KBM-7 (cell line): ENCODE measurements at regions of chr4 and their contacts with region 1.

Region 1: GRCh38 chr4:88211473-88212252 is 53.2 kb upstream of the ABCG2 start:
- DNase-seq: peak; percentile 80

Region 2: DNA sequence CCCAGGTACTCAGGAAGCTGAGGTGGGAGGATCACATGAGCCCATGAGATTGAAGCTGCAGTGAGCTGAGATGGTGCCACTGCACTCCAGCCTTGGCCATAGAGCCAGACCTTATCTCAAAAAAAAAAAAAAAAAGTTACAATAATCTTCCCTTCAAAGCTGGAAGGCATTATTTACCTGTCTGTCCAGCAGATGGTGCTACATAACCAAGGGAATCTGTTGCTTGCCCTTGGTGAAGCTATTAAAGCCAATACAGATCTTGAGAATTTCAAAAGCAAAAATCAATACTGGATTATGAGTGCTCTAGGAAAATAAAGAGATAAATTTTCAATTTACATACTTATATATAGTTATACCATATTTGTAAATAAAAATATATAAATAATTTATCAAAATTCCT is 178.4 kb before region 1 on chr4:
- in situ Hi-C with region 1: loop called (anchors 25 kb)
- DNase-seq: peak; percentile 65

Region 3: GRCh38 chr4:88514557-88515511 is 303.2 kb after region 1 on chr4:
- in situ Hi-C with region 1: loop called (anchors 10 kb)
- DNase-seq: no peak